Ovary (tissue), 10 donors: ENCODE measurements at regions of chr20 and their contacts with region 1.

Region 1: GRCh38 chr20:63884506-63885263 is 10.2 kb upstream of the DNAJC5 start:
- DNase-seq: no peak
- H3K4me3 ChIP-seq: no peak overlapping the region
- H3K27ac ChIP-seq: no peak overlapping the region
- H3K4me1 ChIP-seq: no peaks in the 10 kb centered on the region
- H3K27me3 ChIP-seq: no peaks in the 10 kb centered on the region
- CTCF ChIP-seq: no peak
- EP300 ChIP-seq: no peak
- POLR2A ChIP-seq: no peak

Region 2: DNA sequence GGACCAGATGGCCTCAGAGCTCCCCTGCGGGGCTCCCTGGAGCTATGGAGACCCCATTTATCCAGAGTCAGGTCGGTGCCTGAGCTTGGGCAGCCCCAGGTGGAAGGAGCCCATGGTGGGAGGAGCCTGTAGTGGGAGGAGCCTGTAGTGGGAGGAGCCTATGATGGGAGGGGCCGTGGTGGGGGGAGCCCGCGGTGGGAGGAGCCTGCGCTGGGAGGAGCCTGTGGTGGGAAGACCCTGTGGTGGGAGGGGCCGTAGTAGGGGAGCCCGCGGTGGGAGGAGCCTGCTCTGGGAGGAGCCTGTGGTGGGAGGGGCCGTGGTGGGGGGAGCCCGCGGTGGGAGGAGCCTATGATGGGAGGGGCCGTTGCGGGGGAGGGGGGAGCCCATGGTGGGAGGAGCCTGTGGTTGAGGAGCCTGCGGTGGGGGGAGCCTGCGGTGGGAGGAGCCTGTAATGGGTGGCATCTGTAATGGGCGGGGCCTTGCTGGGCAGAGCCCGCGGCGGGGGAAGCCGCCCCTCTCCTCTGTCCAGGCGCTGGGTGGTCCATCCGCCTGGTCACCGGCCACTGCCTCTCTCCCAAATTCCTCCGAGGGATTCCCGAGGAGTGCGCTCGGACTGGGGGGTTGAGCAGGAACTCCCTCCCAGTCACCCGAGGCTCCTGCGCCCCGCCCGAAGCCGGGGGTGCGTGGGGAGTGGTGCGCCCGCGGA is 331.3 kb before region 1 on chr20:
- intact Hi-C with region 1: loop called in 1 of 4 experiments (anchors 10 kb)
- DNase-seq: peak; percentile 55 to 85 (median 75)
- H3K4me3 ChIP-seq: peak overlapping the region; percentile 39
- H3K27ac ChIP-seq: no peak overlapping the region
- H3K4me1 ChIP-seq: peaks cover 1% of the 10 kb centered on the region
- H3K27me3 ChIP-seq: no peaks in the 10 kb centered on the region
- CTCF ChIP-seq: no peak
- EP300 ChIP-seq: no peak
- POLR2A ChIP-seq: no peak

Region 3: GRCh38 chr20:64069614-64070243 is 185.0 kb after region 1 on chr20:
- intact Hi-C with region 1: no loop called
- DNase-seq: no peak
- H3K4me3 ChIP-seq: no peak overlapping the region
- H3K27ac ChIP-seq: no peak overlapping the region
- H3K4me1 ChIP-seq: no peaks in the 10 kb centered on the region
- H3K27me3 ChIP-seq: no peaks in the 10 kb centered on the region
- CTCF ChIP-seq: no peak
- EP300 ChIP-seq: no peak
- POLR2A ChIP-seq: no peak